ENCODE measurements at regions of chr18 and their contacts with region 1.

Region 1: GRCh38 chr18:74342416-74343043 is 26.9 kb downstream of the C18orf63 start:
- DNase-seq: peak; percentile 31
- H3K4me3 ChIP-seq: no peak overlapping the region; a peak in 1 of 4 replicates
- H3K27ac ChIP-seq: no peak overlapping the region
- H3K4me1 ChIP-seq: no peaks in the 10 kb centered on the region
- H3K27me3 ChIP-seq: peaks cover 3% of the 10 kb centered on the region; the same call in 1 of the 2 replicates
- CTCF ChIP-seq: peak; percentile 74
- EP300 ChIP-seq: no peak
- RAD21 ChIP-seq: peak; percentile 90

Region 2: GRCh38 chr18:73824671-73825070 is 517.9 kb before region 1 on chr18:
- CTCF ChIA-PET with region 1: no interaction called
- POLR2A ChIA-PET with region 1: no interaction called
- DNase-seq: no peak
- H3K4me3 ChIP-seq: no peak overlapping the region
- H3K27ac ChIP-seq: no peak overlapping the region
- H3K4me1 ChIP-seq: no peaks in the 10 kb centered on the region; a peak in 1 of 4 replicates
- H3K27me3 ChIP-seq: peaks cover 9% of the 10 kb centered on the region; the same call in 1 of the 2 replicates
- CTCF ChIP-seq: no peak
- EP300 ChIP-seq: 0 out of 4 replicates have a peak, but pooled peaks of 1 of the 2 experiments have one; percentile 8
- RAD21 ChIP-seq: no peak

Region 3: GRCh38 chr18:74081966-74082741 is 260.4 kb before region 1 on chr18:
- CTCF ChIA-PET with region 1: interaction called, 19 read pairs
- POLR2A ChIA-PET with region 1: no interaction called
- DNase-seq: peak; percentile 66
- H3K4me3 ChIP-seq: no peak overlapping the region
- H3K27ac ChIP-seq: no peak overlapping the region
- H3K4me1 ChIP-seq: no peaks in the 10 kb centered on the region; a peak in 1 of 4 replicates
- H3K27me3 ChIP-seq: peaks cover 4% of the 10 kb centered on the region; the same call in 1 of the 2 replicates
- CTCF ChIP-seq: peak; percentile 33
- EP300 ChIP-seq: no peak
- RAD21 ChIP-seq: peak; percentile 55

Region 4: DNA sequence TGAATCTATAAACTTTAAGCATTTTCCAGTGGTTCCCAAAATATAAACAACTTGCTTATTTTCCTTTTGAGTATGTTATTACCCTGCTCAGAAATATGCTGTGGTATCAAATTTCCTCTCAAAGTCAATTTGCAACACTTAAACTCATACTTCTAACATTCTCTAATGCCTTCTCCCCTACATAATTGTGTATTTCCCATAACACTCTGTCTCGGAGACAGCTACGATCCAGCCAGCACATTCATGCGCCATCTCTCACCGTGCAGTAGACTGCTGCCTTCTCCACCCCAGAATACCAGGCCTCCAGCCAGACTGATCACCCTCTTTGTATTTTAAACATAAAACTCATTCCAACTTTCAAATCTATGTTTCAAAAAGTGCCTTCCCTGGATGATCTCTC is 152.4 kb before region 1 on chr18:
- CTCF ChIA-PET with region 1: interaction called, 60 read pairs
- POLR2A ChIA-PET with region 1: no interaction called
- DNase-seq: no peak
- H3K4me3 ChIP-seq: no peak overlapping the region
- H3K27ac ChIP-seq: no peak overlapping the region
- H3K4me1 ChIP-seq: no peaks in the 10 kb centered on the region
- H3K27me3 ChIP-seq: peaks cover 37% of the 10 kb centered on the region
- CTCF ChIP-seq: no peak
- EP300 ChIP-seq: no peak
- RAD21 ChIP-seq: no peak

Region 5: DNA sequence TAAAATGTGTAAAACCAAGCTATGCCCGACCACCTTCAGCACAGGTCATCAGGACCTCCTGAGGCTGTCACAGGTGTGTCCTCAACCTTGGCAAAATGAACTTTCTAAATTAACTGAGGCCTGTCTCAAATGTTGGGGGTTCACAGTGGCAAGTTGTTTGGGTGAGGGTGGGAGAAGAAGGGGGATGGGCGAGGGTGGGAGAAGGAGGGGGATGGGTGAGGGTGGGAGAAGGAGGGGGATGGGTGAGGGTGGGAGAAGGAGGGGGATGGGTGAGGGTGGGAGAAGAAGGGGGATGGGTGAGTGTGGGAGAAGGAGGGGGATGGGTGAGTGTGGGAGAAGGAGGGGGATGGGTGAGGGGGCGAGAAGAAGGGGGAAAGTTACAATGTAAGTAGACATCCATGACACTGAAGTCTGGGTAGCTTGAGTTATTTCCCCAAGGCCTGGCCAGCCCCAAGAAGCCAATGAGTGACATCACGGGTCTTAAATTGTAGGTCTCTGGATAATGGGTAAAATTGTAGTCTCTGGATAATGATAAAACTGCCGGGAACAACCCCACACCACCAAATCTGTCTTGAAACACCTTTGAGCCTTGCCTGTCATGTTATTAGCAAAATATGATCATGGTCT is 137.9 kb before region 1 on chr18:
- CTCF ChIA-PET with region 1: interaction called, 91 read pairs
- POLR2A ChIA-PET with region 1: no interaction called
- DNase-seq: no peak
- H3K4me3 ChIP-seq: no peak overlapping the region
- H3K27ac ChIP-seq: no peak overlapping the region
- H3K4me1 ChIP-seq: no peaks in the 10 kb centered on the region
- H3K27me3 ChIP-seq: peaks cover 16% of the 10 kb centered on the region
- CTCF ChIP-seq: no peak
- EP300 ChIP-seq: no peak
- RAD21 ChIP-seq: no peak

Region 6: DNA sequence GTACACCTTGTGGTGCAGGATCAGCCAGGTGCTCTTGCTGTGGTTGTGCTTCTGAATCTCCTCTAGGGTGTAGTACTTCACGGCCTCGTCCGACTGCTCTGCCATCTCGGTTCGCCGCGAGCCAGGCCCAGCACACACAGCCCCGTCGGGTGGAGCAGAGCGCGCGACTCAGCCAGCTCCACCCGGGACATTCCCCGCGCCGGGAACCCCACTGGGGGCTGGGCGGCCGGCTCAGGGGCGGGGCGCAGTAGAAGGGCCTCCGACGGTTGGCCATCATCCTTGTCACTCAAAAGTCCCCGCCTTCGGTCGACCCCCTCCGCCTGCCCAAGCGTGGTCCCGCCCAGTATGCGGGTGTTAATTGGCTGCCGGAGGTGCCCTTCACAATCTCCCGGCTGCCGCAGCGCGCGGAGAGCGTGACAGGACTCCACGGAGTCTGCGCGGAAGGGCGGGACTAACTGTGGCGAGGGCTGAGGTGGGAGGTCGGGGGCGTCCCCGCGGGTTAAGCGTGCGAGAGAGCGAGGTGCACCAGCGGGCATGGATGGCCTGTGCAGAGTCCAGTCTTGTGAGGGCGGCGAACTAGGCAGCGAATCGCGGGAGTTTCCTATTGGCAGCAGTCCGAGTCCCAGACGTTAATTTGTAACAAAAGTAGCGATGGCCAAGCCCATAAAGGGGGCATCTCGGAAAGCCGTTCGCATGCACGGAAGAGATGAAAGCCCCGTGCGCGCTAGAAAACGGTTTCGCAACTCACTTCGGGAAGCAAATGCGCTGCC is 50.6 kb before region 1 on chr18 and contains the start of gene CYB5A:
- CTCF ChIA-PET with region 1: interaction called, 19 read pairs
- POLR2A ChIA-PET with region 1: no interaction called
- DNase-seq: peak; percentile 100
- H3K4me3 ChIP-seq: peak within 1 kb of the TSS; percentile 67 to 96
- H3K27ac ChIP-seq: peak within 1 kb of the TSS in 1 of 2 experiments; percentile 82; a peak in 2 of 4 replicates
- H3K4me1 ChIP-seq: peaks cover 0 to 17% of the 10 kb centered on the region in 2 experiments; a peak in 1 of 4 replicates
- H3K27me3 ChIP-seq: no peaks in the 10 kb centered on the region
- CTCF ChIP-seq: no peak; the same call in 1 of the 2 replicates
- EP300 ChIP-seq: no peak
- RAD21 ChIP-seq: no peak
- polyA plus RNA-seq, gene CYB5A: 39.0 and 42.1 TPM in 2 replicates

Region 7: DNA sequence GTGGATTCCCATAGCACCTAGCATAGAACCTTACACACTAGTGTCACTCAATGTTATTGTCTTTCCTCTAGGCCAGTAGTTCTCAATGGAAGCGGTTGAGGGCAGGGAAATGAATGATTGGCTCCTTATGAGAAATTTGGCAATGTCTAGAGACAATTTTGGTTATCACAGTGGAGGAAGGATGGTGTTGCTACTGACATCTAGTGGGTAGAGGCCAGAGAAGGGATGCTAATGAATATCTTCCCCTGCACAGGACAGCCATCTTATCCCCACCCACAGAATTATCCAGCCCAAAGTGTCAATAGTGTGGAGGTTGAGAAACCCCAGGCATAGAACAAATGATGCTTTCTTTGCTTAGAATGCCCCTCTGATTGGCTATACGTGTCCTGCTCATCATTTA is 11.1 kb before region 1 on chr18:
- CTCF ChIA-PET with region 1: interaction called, 13 read pairs
- POLR2A ChIA-PET with region 1: no interaction called
- DNase-seq: peak; percentile 33
- H3K4me3 ChIP-seq: peak overlapping the region in 1 of 2 experiments; percentile 20; a peak in 1 of 4 replicates
- H3K27ac ChIP-seq: no peak overlapping the region
- H3K4me1 ChIP-seq: no peaks in the 10 kb centered on the region
- H3K27me3 ChIP-seq: no peaks in the 10 kb centered on the region
- CTCF ChIP-seq: peak; percentile 36
- EP300 ChIP-seq: no peak
- RAD21 ChIP-seq: peak; percentile 66

Region 8: GRCh38 chr18:74412116-74412880 is 69.8 kb after region 1 on chr18:
- CTCF ChIA-PET with region 1: no interaction called
- POLR2A ChIA-PET with region 1: no interaction called
- DNase-seq: no peak
- H3K4me3 ChIP-seq: no peak overlapping the region
- H3K27ac ChIP-seq: no peak overlapping the region
- H3K4me1 ChIP-seq: no peaks in the 10 kb centered on the region
- H3K27me3 ChIP-seq: peaks cover 72% of the 10 kb centered on the region
- CTCF ChIP-seq: no peak
- EP300 ChIP-seq: no peak
- RAD21 ChIP-seq: no peak

Region 9: DNA sequence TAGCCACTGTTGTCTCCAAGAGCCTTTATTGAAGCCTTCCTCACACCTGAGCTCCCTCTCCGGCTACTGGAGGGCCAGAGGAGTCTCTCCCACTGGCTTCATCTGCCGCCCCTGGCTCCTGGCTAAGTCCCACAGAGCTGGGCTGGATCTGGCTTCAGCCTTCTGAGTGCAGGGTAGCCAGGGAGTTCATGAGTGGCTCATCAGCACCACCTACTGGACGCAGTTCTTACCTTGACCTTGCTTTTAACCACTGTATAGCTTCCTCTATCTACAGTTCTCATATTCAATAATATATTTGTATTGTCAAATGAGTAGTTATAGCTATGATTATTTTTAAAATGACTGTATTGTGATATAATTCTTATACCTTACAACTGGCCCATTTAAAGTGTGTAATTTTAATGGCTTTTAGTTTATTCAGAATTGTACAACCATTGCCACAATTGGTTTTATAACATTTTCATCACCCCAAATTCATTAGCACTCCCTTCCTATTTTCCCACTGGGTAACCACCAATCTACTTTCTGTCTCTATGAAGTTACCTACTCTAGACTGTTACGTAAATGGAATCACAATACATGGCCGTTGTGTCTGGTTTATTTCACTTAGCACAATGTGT is 209.5 kb after region 1 on chr18:
- CTCF ChIA-PET with region 1: interaction called, 88 read pairs
- POLR2A ChIA-PET with region 1: no interaction called
- DNase-seq: peak; percentile 84
- H3K4me3 ChIP-seq: no peak overlapping the region; a peak in 1 of 4 replicates
- H3K27ac ChIP-seq: no peak overlapping the region
- H3K4me1 ChIP-seq: no peaks in the 10 kb centered on the region
- H3K27me3 ChIP-seq: peaks cover 23% of the 10 kb centered on the region; the same call in 1 of the 2 replicates
- CTCF ChIP-seq: peak; percentile 82
- EP300 ChIP-seq: no peak
- RAD21 ChIP-seq: peak; percentile 89

Measured in SK-N-SH (cell line).